ENCODE measurements at regions of chr19 and their contacts with region 1.

Region 1: GRCh38 chr19:42132851-42133528 is 744 bp upstream of the POU2F2 start:
- DNase-seq: peak in 1 of 2 experiments; percentile 83
- H3K4me3 ChIP-seq: peak overlapping the region; percentile 37; the same call in 1 of the 2 replicates
- H3K27ac ChIP-seq: no peak overlapping the region
- H3K4me1 ChIP-seq: no peaks in the 10 kb centered on the region
- H3K27me3 ChIP-seq: peaks cover 6% of the 10 kb centered on the region; the same call in 1 of the 2 replicates
- CTCF ChIP-seq: peak; percentile 97

Region 2: DNA sequence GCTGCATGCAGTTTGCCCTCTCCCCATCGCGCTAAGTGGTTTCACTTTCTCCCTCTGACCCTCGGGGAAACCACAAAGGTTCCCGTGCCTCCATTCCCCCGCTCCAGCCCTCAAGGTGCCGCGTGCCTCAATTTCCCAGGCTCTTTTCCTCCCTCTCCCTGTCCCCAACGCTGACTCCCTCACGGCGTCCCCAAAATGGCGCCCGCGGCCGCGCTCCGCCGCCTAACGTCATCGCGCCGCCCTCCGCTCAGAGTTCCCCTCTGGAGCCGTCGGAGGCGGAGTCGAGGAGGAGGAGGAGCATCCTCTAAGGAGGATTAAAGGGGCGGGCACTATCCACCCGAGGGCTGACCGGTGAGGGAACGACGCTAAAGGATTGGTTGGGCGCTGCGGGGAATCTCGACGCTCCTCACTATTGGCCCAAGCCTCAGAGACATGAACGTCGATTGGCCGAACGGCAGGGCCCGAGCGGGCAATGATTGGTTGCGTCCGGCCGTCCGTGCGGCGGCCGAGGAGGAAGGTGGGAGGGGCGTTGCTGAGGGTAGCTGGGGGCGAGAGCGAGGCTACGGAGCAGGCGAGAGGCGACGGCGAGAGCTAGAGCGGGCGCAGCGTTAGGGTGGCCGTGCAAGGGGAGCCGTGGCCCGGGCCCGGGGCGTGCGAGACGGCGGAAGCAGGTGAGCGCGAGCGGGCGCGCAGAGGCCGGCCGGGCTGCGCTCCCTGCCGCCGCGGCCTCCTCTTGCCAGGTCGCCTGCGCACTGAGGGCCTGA is 57.2 kb before region 1 on chr19 and contains the start of gene ZNF574:
- CTCF ChIA-PET with region 1: no interaction called
- POLR2A ChIA-PET with region 1: no interaction called
- intact Hi-C with region 1: no loop called
- DNase-seq: peak; percentile 98
- H3K4me3 ChIP-seq: peak within 1 kb of the TSS; percentile 90
- H3K27ac ChIP-seq: peak within 1 kb of the TSS; percentile 90
- H3K4me1 ChIP-seq: peaks cover 25% of the 10 kb centered on the region
- H3K27me3 ChIP-seq: no peaks in the 10 kb centered on the region
- CTCF ChIP-seq: no peak
- total RNA-seq, gene ZNF574: 19.4 and 21.6 TPM in 2 replicates

Region 3: GRCh38 chr19:42154471-42155323 is 21.7 kb after region 1 on chr19:
- CTCF ChIA-PET with region 1: interaction called, 14 read pairs
- POLR2A ChIA-PET with region 1: no interaction called
- intact Hi-C with region 1: no loop called
- DNase-seq: no peak
- H3K4me3 ChIP-seq: no peak overlapping the region
- H3K27ac ChIP-seq: no peak overlapping the region
- H3K4me1 ChIP-seq: no peaks in the 10 kb centered on the region
- H3K27me3 ChIP-seq: peaks cover 47% of the 10 kb centered on the region
- CTCF ChIP-seq: no peak

Region 4: GRCh38 chr19:42207767-42208271 is 74.8 kb after region 1 on chr19:
- CTCF ChIA-PET with region 1: interaction called, 21 read pairs
- POLR2A ChIA-PET with region 1: no interaction called
- intact Hi-C with region 1: loop called (anchors 1 kb)
- DNase-seq: peak; percentile 81 to 85
- H3K4me3 ChIP-seq: peak overlapping the region; percentile 31; the same call in 1 of the 2 replicates
- H3K27ac ChIP-seq: peak overlapping the region; percentile 93
- H3K4me1 ChIP-seq: peaks cover 48% of the 10 kb centered on the region
- H3K27me3 ChIP-seq: no peaks in the 10 kb centered on the region
- CTCF ChIP-seq: no peak

Region 5: GRCh38 chr19:42219812-42220750 is 87.1 kb after region 1 on chr19 and contains the start of gene ZNF526:
- CTCF ChIA-PET with region 1: no interaction called
- POLR2A ChIA-PET with region 1: no interaction called
- intact Hi-C with region 1: loop called (anchors 5 kb)
- DNase-seq: peak; percentile 92 to 97
- H3K4me3 ChIP-seq: peak within 1 kb of the TSS; percentile 84
- H3K27ac ChIP-seq: peak within 1 kb of the TSS; percentile 27
- H3K4me1 ChIP-seq: peaks cover 35% of the 10 kb centered on the region
- H3K27me3 ChIP-seq: no peaks in the 10 kb centered on the region
- CTCF ChIP-seq: no peak
- total RNA-seq, gene ZNF526: 13.4 and 13.9 TPM in 2 replicates

Region 6: DNA sequence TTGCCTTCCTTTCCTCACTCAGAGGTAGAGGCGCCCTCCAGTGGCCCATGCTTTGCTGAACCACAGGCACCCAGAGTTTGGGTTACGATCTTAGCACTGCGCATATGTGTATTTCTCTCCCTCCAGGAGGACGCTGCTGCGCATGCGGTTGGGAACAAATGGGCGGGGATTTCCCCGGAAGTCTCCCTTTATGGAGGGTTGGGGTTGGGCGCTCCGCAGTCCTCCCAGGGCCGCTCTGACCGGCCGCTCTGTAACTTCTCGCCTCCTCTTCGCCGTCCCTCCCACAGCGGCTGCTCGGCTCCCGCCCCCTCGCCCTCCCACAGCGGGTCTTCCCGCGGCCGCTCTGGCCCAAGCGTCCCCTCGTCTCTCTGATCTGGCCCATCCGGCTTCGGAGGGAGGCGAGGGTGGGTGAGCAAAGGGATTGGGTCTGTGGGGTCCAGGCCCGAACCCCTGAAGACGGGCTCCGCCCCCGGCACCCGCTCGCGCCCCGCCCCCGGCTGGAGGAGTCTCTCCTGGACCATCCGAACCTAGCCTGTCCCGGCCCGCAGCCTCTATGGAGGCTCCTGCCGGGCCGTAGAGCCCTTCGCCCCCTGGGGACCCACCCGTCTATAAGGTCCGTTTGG is 192.4 kb after region 1 on chr19 and contains the start of gene MEGF8:
- CTCF ChIA-PET with region 1: no interaction called
- POLR2A ChIA-PET with region 1: no interaction called
- intact Hi-C with region 1: loop called (anchors 2 kb)
- DNase-seq: peak; percentile 96 to 98
- H3K4me3 ChIP-seq: peak within 1 kb of the TSS; percentile 94
- H3K27ac ChIP-seq: no peak within 1 kb of the TSS
- H3K4me1 ChIP-seq: peaks cover 14% of the 10 kb centered on the region
- H3K27me3 ChIP-seq: no peaks in the 10 kb centered on the region
- CTCF ChIP-seq: no peak; the same call in none of the 2 replicates
- total RNA-seq, gene MEGF8: 40.6 and 49.0 TPM in 2 replicates

Region 7: DNA sequence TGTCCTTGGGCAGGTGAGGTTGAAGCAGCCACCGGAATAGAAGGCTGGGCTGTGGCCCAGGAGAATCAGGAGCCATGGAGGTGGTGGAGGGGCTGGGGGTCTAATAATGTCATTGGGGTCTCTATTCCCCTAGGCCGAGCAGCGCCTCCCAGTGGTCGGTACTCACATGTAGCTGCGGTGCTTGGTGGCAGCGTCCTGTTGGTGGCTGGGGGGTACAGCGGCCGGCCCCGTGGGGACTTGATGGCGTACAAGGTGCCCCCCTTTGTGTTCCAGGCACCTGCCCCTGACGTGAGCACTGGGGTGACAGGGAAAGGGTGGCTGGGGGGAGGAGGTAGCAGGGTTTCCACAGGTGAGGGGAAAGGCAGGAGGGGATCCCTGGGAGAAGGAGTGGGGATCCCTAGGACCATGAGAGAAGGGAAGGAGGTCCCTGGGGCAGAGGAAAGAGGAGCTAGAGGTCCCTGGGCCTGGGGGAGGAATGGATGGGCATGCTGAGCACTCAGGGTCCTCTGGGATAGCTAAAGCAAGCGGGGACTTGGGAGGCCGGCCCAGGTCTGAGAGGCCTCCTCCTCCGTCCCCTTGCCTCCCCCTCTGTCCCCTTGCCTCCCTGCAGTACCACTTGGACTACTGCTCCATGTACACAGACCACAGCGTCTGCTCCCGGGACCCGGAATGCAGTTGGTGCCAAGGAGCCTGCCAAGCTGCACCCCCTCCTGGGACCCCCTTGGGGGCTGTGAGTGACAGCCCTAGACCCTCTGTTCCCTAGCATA is 210.5 kb after region 1 on chr19:
- CTCF ChIA-PET with region 1: no interaction called
- POLR2A ChIA-PET with region 1: no interaction called
- intact Hi-C with region 1: no loop called
- DNase-seq: no peak
- H3K4me3 ChIP-seq: no peak overlapping the region
- H3K27ac ChIP-seq: no peak overlapping the region
- H3K4me1 ChIP-seq: peaks cover 7% of the 10 kb centered on the region; the same call in 1 of the 2 replicates
- H3K27me3 ChIP-seq: no peaks in the 10 kb centered on the region
- CTCF ChIP-seq: no peak

Region 8: GRCh38 chr19:42433503-42434260 is 300.7 kb after region 1 on chr19:
- CTCF ChIA-PET with region 1: no interaction called
- POLR2A ChIA-PET with region 1: no interaction called
- intact Hi-C with region 1: loop called (anchors 1 kb)
- DNase-seq: peak; percentile 55 to 76
- H3K4me3 ChIP-seq: no peak overlapping the region
- H3K27ac ChIP-seq: peak overlapping the region; percentile 45
- H3K4me1 ChIP-seq: peaks cover 9% of the 10 kb centered on the region
- H3K27me3 ChIP-seq: no peaks in the 10 kb centered on the region
- CTCF ChIP-seq: peak; percentile 78